ENCODE measurements at regions of chr2 and their contacts with region 1.

Region 1: DNA sequence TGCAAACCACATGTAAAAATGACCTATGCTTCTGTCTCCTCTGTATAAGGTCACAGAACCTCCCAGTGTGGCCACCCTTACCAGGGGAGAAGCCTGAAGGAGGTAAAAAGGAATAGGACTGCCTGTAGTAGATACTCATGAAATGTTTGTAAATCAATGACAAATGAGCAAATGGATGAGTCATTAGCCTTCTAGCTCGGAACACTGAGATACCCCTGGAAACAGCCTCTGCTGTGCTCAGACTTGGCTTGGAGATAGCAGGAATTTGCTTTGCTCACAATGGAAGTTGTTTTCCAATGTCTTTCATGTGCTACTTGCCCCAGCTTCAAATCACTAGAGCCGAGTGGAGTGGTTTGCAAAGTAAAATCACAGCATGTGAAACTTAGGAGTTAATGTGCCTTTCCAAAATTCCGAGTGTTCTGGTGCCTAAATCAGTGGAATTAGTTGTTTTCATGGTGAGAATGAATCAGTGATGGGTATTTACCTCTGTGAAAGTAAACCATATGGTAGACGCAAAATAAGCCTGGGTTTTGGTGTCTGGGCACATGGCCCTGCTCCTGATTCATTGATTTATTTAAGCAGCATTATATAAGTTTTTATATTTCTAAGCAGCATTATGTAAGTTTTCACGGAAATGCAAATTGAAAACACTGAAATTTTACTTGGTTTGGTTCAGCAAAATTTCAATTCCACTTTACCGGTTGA is 154.0 kb upstream of the MAP3K20 start:
- DNase-seq: peak; percentile 29
- H3K4me3 Mint-ChIP-seq: no peak overlapping the region
- H3K27ac Mint-ChIP-seq: no peak overlapping the region
- H3K4me1 Mint-ChIP-seq: no peaks in the 10 kb centered on the region
- H3K27me3 Mint-ChIP-seq: peaks cover 11% of the 10 kb centered on the region
- CTCF ChIP-seq: no peak

Region 2: DNA sequence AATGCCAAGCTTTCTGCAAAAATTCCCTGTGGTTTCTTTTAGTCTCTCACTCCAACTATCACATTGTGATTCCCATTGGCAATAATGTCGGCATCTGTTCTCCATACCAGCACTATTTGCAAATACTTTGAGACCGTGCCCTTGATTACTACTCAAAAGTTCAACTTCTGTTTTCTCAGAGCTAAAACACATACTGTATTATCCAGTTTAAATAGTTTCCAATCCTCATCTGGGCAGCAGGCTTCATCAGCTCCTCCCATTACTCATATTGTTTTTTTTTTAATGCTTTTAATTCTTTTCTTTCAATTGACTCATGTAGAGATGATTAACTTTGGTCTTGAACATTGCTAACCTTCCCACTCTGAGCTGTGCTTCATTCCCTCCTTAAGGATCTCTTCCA is 1623.7 kb before region 1 on chr2:
- CTCF ChIA-PET with region 1: no interaction called
- POLR2A ChIA-PET with region 1: no interaction called
- intact Hi-C with region 1: no loop called
- DNase-seq: no peak
- H3K4me3 Mint-ChIP-seq: no peak overlapping the region
- H3K27ac Mint-ChIP-seq: no peak overlapping the region
- H3K4me1 Mint-ChIP-seq: no peaks in the 10 kb centered on the region
- H3K27me3 Mint-ChIP-seq: no peaks in the 10 kb centered on the region
- CTCF ChIP-seq: no peak

Region 3: GRCh38 chr2:172813314-172813888 is 108.3 kb before region 1 on chr2:
- CTCF ChIA-PET with region 1: interaction called, 20 read pairs
- POLR2A ChIA-PET with region 1: interaction called, 4 read pairs
- intact Hi-C with region 1: no loop called
- DNase-seq: peak; percentile 38
- H3K4me3 Mint-ChIP-seq: no peak overlapping the region
- H3K27ac Mint-ChIP-seq: no peak overlapping the region
- H3K4me1 Mint-ChIP-seq: no peaks in the 10 kb centered on the region
- H3K27me3 Mint-ChIP-seq: no peaks in the 10 kb centered on the region
- CTCF ChIP-seq: peak; percentile 43

Region 4: GRCh38 chr2:173064151-173064805 is 142.6 kb after region 1 on chr2:
- CTCF ChIA-PET with region 1: no interaction called
- POLR2A ChIA-PET with region 1: no interaction called
- intact Hi-C with region 1: no loop called
- DNase-seq: no peak
- H3K4me3 Mint-ChIP-seq: no peak overlapping the region
- H3K27ac Mint-ChIP-seq: no peak overlapping the region
- H3K4me1 Mint-ChIP-seq: peaks cover 25% of the 10 kb centered on the region
- H3K27me3 Mint-ChIP-seq: no peaks in the 10 kb centered on the region
- CTCF ChIP-seq: no peak

Region 5: GRCh38 chr2:173734797-173735196 is 813.1 kb after region 1 on chr2:
- CTCF ChIA-PET with region 1: no interaction called
- POLR2A ChIA-PET with region 1: no interaction called
- intact Hi-C with region 1: no loop called
- DNase-seq: no peak
- H3K4me3 Mint-ChIP-seq: no peak overlapping the region
- H3K27ac Mint-ChIP-seq: no peak overlapping the region
- H3K4me1 Mint-ChIP-seq: no peaks in the 10 kb centered on the region
- H3K27me3 Mint-ChIP-seq: peaks cover 11% of the 10 kb centered on the region
- CTCF ChIP-seq: no peak